Breast epithelium (tissue), 4 donors: ENCODE measurements at regions of chr17 and their contacts with region 1.

Region 1: GRCh38 chr17:78557598-78558039 is 19.6 kb downstream of the DNAH17 start:
- DNase-seq: no peak
- H3K4me3 ChIP-seq: no peak overlapping the region
- H3K27ac ChIP-seq: no peak overlapping the region
- H3K4me1 ChIP-seq: no peaks in the 10 kb centered on the region
- H3K27me3 ChIP-seq: peaks cover 0 to 8% of the 10 kb centered on the region in 2 donors
- CTCF ChIP-seq: no peak
- POLR2A ChIP-seq: no peak

Region 2: GRCh38 chr17:76893623-76894334 is 1663.8 kb before region 1 on chr17:
- intact Hi-C with region 1: loop called (anchors 10 kb)
- DNase-seq: no peak
- H3K4me3 ChIP-seq: no peak overlapping the region
- H3K27ac ChIP-seq: no peak overlapping the region
- H3K4me1 ChIP-seq: no peaks in the 10 kb centered on the region
- H3K27me3 ChIP-seq: no peaks in the 10 kb centered on the region
- CTCF ChIP-seq: no peak
- POLR2A ChIP-seq: no peak

Region 3: GRCh38 chr17:78568494-78569115 is 11.0 kb after region 1 on chr17:
- intact Hi-C with region 1: no loop called
- DNase-seq: no peak
- H3K4me3 ChIP-seq: no peak overlapping the region
- H3K27ac ChIP-seq: no peak overlapping the region
- H3K4me1 ChIP-seq: no peaks in the 10 kb centered on the region
- H3K27me3 ChIP-seq: no peaks in the 10 kb centered on the region
- CTCF ChIP-seq: no peak
- POLR2A ChIP-seq: no peak